Sigmoid colon (tissue), 7 donors: ENCODE measurements at regions of chr22 and their contacts with region 1.

Region 1: DNA sequence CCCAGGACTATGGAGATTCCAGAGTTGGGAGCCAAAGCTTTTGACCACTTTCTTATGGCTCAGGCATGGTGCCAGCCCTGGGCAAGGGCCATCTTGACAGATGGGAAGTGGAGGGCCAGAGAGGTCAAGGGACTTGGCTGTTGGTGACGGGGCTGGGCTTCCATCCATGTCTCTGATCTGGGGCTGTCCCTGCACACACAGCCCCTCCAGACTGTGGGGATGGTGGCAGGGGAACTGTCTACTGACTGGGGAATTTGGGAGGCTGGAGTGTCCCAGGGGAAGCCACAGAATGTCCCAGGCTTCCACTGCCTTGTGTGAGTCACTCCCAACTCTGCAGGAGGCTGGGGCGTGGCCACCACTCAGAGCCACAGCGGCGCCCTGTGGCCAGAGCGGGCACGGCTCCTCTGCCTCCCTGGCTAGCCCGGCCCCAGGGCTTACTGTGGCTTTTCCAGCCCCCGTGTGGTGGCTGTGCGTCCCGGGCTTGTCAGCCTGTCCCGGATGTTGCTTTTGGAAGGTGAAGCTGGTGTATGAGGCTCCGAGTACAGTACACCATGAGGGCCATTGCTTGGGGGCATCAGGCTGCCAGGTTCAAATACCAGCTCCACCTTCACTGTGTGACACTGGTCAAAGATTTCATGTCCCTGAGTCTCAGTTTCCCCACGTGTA is 19.6 kb downstream of the C22orf23 start:
- DNase-seq: peak; percentile 94
- H3K4me3 ChIP-seq: no peak overlapping the region
- H3K27ac ChIP-seq: peak overlapping the region; percentile 75 to 97 (median 81)
- H3K4me1 ChIP-seq: peaks cover 0 to 55% (median 50%) of the 10 kb centered on the region in 4 donors
- H3K27me3 ChIP-seq: no peaks in the 10 kb centered on the region
- CTCF ChIP-seq: peak; percentile 94 to 98 (median 96)
- EP300 ChIP-seq: no peak
- POLR2A ChIP-seq: no peak

Region 2: GRCh38 chr22:37832022-37832857 is 101.6 kb before region 1 on chr22:
- intact Hi-C with region 1: no loop called
- DNase-seq: no peak
- H3K4me3 ChIP-seq: no peak overlapping the region
- H3K27ac ChIP-seq: no peak overlapping the region
- H3K4me1 ChIP-seq: peaks cover 0 to 5% (median 2%) of the 10 kb centered on the region in 4 donors
- H3K27me3 ChIP-seq: no peaks in the 10 kb centered on the region
- CTCF ChIP-seq: no peak
- EP300 ChIP-seq: no peak
- POLR2A ChIP-seq: no peak

Region 3: DNA sequence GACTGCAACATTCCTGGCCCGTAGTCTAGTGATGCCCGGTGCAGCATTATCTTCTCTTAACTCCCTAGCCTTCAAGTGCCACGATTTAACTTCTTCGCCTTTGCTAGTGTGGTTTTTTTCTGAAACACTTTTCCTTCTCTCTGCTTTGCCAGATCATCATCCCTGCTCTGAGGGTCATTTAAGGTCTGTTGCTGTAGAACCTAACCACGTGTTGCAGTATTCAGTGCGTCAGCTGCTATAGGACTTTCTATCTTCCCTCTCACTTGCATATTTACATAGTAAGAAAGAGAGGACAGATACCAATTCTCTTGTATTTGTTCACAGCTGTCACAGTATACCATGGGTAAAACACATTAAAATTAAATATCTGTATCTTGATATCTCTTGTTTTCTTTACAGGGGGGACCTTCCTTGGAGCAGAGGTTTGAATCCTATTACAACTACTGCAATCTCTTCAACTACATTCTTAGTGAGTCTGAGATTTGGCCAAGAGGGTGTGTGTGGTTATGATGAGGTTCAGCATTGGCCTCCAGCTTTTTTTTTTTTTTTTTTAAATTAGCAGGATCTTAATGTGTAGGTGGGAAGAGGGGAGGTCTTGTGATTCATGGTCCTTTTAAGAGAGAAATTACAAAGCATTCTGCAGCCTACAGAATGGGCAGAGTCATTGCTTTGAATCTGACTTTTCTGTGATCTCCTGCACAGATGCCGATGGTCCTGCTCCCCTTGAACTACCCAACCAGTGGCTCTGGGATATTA is 71.1 kb before region 1 on chr22:
- intact Hi-C with region 1: no loop called
- DNase-seq: no peak
- H3K4me3 ChIP-seq: no peak overlapping the region
- H3K27ac ChIP-seq: peak overlapping the region in 3 of 4 donors; percentile 46 to 74 (median 65)
- H3K4me1 ChIP-seq: peaks cover 0 to 23% (median 10%) of the 10 kb centered on the region in 4 donors
- H3K27me3 ChIP-seq: no peaks in the 10 kb centered on the region
- CTCF ChIP-seq: no peak
- EP300 ChIP-seq: no peak
- POLR2A ChIP-seq: no peak

Region 4: GRCh38 chr22:37887610-37888378 is 46.0 kb before region 1 on chr22:
- intact Hi-C with region 1: loop called (anchors 1 kb)
- DNase-seq: peak; percentile 91
- H3K4me3 ChIP-seq: no peak overlapping the region
- H3K27ac ChIP-seq: peak overlapping the region; percentile 73 to 89 (median 83)
- H3K4me1 ChIP-seq: peaks cover 0 to 85% (median 71%) of the 10 kb centered on the region in 4 donors
- H3K27me3 ChIP-seq: no peaks in the 10 kb centered on the region
- CTCF ChIP-seq: peak in 3 of 4 experiments; percentile 56 to 59 (median 58)
- EP300 ChIP-seq: no peak
- POLR2A ChIP-seq: no peak

Region 5: GRCh38 chr22:37910890-37911743 is 22.7 kb before region 1 on chr22:
- intact Hi-C with region 1: loop called (anchors 2 kb)
- DNase-seq: peak; percentile 85
- H3K4me3 ChIP-seq: peak overlapping the region in 3 of 4 donors; percentile 7 to 39 (median 22)
- H3K27ac ChIP-seq: peak overlapping the region; percentile 88 to 97 (median 92)
- H3K4me1 ChIP-seq: peaks cover 0 to 75% (median 62%) of the 10 kb centered on the region in 4 donors
- H3K27me3 ChIP-seq: no peaks in the 10 kb centered on the region
- CTCF ChIP-seq: no peak
- EP300 ChIP-seq: no peak
- POLR2A ChIP-seq: no peak

Region 6: GRCh38 chr22:37953437-37954179 is 19.8 kb after region 1 on chr22 and contains the starts of genes C22orf23 and POLR2F:
- intact Hi-C with region 1: no loop called
- DNase-seq: peak; percentile 98
- H3K4me3 ChIP-seq: peak within 1 kb of the TSS; percentile 69 to 80 (median 72)
- H3K27ac ChIP-seq: peak within 1 kb of the TSS; percentile 67 to 83 (median 78)
- H3K4me1 ChIP-seq: peaks cover 0 to 27% (median 23%) of the 10 kb centered on the region in 4 donors
- H3K27me3 ChIP-seq: no peaks in the 10 kb centered on the region
- CTCF ChIP-seq: no peak
- EP300 ChIP-seq: no peak
- POLR2A ChIP-seq: peak; percentile 40 to 72
- total RNA-seq, gene C22orf23: 0.36 TPM in 1 of 4 donors, not detected in the others
- total RNA-seq, gene POLR2F: 47.9 to 149 (median 71.1) TPM